Activated naive CD4-positive, alpha-beta T cell treated with anti-CD3 and anti-CD28 coated beads for 36 hours (primary cell): ENCODE measurements at regions of chr5 and their contacts with region 1.

Region 1: GRCh38 chr5:129361440-129362025 is 98.6 kb upstream of the ADAMTS19 start:
- DNase-seq: no peak
- H3K4me3 Mint-ChIP-seq: no peak overlapping the region
- H3K27ac Mint-ChIP-seq: no peak overlapping the region
- H3K4me1 Mint-ChIP-seq: no peaks in the 10 kb centered on the region
- H3K27me3 Mint-ChIP-seq: no peaks in the 10 kb centered on the region

Region 2: GRCh38 chr5:129431406-129431805 is 69.9 kb after region 1 on chr5:
- CTCF ChIA-PET with region 1: no interaction called
- intact Hi-C with region 1: no loop called
- DNase-seq: no peak
- H3K4me3 Mint-ChIP-seq: no peak overlapping the region
- H3K27ac Mint-ChIP-seq: no peak overlapping the region
- H3K4me1 Mint-ChIP-seq: no peaks in the 10 kb centered on the region
- H3K27me3 Mint-ChIP-seq: no peaks in the 10 kb centered on the region

Region 3: DNA sequence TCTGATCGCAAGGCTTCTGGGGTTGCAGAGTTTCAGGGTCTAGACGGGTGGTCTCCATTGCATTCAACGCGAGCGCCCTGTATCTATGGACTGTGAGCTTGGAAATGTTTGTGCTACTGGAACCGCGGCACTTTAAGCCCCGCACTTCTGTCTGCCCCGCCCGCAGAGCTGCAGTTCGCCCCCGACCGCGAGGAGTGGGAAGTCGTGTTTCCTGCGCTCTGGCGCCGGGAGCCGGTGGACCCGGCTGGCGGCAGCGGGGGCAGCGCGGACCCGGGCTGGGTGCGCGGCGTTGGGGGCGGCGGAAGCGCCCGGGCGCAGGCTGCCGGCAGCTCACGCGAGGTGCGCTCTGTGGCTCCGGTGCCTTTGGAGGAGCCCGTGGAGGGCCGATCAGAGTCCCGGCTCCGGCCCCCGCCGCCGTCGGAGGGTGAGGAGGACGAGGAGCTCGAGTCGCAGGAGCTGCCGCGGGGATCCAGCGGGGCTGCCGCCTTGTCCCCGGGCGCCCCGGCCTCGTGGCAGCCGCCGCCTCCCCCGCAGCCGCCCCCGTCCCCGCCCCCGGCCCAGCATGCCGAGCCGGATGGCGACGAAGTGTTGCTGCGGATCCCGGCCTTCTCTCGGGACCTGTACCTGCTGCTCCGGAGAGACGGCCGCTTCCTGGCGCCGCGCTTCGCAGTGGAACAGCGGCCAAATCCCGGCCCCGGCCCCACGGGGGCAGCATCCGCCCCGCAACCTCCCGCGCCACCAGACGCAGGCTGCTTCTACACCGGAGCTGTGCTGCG is 99.6 kb after region 1 on chr5:
- CTCF ChIA-PET with region 1: interaction called, 10 read pairs
- intact Hi-C with region 1: no loop called
- DNase-seq: peak; percentile 29
- H3K4me3 Mint-ChIP-seq: peak overlapping the region; percentile 38
- H3K27ac Mint-ChIP-seq: no peak overlapping the region
- H3K4me1 Mint-ChIP-seq: peaks cover 12% of the 10 kb centered on the region
- H3K27me3 Mint-ChIP-seq: peaks cover 48% of the 10 kb centered on the region